MCF 10A (cell line): ENCODE measurements at regions of chr10 and their contacts with region 1.

Region 1: GRCh38 chr10:75358835-75359431 is 42.6 kb downstream of the ZNF503 start:
- DNase-seq: peak; percentile 92
- H3K4me3 Mint-ChIP-seq: peak overlapping the region; percentile 65
- H3K27ac Mint-ChIP-seq: peak overlapping the region; percentile 84
- H3K4me1 Mint-ChIP-seq: peaks cover 21% of the 10 kb centered on the region
- H3K27me3 Mint-ChIP-seq: no peaks in the 10 kb centered on the region
- CTCF ChIP-seq: no peak

Region 2: DNA sequence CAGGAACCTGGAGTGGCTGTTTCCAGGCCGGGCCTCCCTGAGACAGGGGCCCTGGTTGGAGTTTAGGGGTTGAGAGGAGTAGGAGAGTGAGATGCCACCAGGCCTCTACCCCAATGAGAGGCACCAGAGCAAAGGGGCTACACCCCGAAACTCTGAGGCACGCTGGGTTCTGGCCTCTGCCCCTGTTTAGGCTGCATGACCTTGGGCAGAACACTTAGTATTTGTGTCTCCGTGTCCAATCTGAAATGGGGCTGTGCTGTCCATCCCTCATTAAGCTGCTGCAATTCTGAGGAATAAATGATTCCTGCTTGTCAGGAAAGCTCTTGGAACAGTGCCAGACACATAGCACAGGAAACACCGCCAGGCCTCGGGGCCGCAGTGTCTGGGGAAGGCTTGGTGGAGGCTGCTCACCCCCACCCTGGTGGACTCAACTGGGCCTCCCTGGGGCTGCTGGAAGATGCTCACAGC is 287.9 kb before region 1 on chr10:
- CTCF ChIA-PET with region 1: no interaction called
- POLR2A ChIA-PET with region 1: no interaction called
- intact Hi-C with region 1: no loop called
- DNase-seq: no peak
- H3K4me3 Mint-ChIP-seq: no peak overlapping the region
- H3K27ac Mint-ChIP-seq: no peak overlapping the region
- H3K4me1 Mint-ChIP-seq: peaks cover 6% of the 10 kb centered on the region
- H3K27me3 Mint-ChIP-seq: no peaks in the 10 kb centered on the region
- CTCF ChIP-seq: no peak

Region 3: GRCh38 chr10:75250910-75251309 is 108.0 kb before region 1 on chr10:
- CTCF ChIA-PET with region 1: interaction called, 4 read pairs
- POLR2A ChIA-PET with region 1: interaction called, 18 read pairs
- intact Hi-C with region 1: no loop called
- DNase-seq: peak; percentile 92
- H3K4me3 Mint-ChIP-seq: peak overlapping the region; percentile 40
- H3K27ac Mint-ChIP-seq: peak overlapping the region; percentile 91
- H3K4me1 Mint-ChIP-seq: peaks cover 26% of the 10 kb centered on the region
- H3K27me3 Mint-ChIP-seq: no peaks in the 10 kb centered on the region
- CTCF ChIP-seq: no peak

Region 4: GRCh38 chr10:75294866-75295701 is 63.8 kb before region 1 on chr10:
- CTCF ChIA-PET with region 1: interaction called, 4 read pairs
- POLR2A ChIA-PET with region 1: interaction called, 64 read pairs
- intact Hi-C with region 1: loop called (anchors 2 kb)
- DNase-seq: peak; percentile 91
- H3K4me3 Mint-ChIP-seq: no peak overlapping the region
- H3K27ac Mint-ChIP-seq: no peak overlapping the region
- H3K4me1 Mint-ChIP-seq: no peaks in the 10 kb centered on the region
- H3K27me3 Mint-ChIP-seq: no peaks in the 10 kb centered on the region
- CTCF ChIP-seq: peak; percentile 23

Region 5: DNA sequence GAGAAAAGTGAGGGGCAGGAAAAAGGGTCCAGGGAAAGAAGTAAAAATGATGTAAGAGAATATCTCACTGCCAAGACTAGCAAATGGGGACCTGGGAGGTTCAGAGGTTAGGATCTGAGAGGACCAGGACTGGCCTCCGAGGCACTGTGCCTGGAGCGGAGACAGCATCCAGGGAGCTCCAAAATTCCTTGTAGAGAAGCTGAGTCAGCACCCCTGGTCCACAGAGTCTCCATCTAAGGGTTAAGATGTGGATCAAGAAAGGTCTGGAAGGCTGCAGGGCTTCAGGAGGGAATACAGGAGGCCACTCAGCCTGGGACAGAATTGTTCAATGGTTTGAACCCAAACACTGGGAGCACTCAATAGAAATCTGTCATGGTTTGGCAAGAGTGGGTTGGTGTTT is 12.1 kb after region 1 on chr10:
- CTCF ChIA-PET with region 1: interaction called, 3 read pairs
- POLR2A ChIA-PET with region 1: interaction called, 14 read pairs
- intact Hi-C with region 1: no loop called
- DNase-seq: no peak
- H3K4me3 Mint-ChIP-seq: no peak overlapping the region
- H3K27ac Mint-ChIP-seq: no peak overlapping the region
- H3K4me1 Mint-ChIP-seq: no peaks in the 10 kb centered on the region
- H3K27me3 Mint-ChIP-seq: no peaks in the 10 kb centered on the region
- CTCF ChIP-seq: no peak

Region 6: DNA sequence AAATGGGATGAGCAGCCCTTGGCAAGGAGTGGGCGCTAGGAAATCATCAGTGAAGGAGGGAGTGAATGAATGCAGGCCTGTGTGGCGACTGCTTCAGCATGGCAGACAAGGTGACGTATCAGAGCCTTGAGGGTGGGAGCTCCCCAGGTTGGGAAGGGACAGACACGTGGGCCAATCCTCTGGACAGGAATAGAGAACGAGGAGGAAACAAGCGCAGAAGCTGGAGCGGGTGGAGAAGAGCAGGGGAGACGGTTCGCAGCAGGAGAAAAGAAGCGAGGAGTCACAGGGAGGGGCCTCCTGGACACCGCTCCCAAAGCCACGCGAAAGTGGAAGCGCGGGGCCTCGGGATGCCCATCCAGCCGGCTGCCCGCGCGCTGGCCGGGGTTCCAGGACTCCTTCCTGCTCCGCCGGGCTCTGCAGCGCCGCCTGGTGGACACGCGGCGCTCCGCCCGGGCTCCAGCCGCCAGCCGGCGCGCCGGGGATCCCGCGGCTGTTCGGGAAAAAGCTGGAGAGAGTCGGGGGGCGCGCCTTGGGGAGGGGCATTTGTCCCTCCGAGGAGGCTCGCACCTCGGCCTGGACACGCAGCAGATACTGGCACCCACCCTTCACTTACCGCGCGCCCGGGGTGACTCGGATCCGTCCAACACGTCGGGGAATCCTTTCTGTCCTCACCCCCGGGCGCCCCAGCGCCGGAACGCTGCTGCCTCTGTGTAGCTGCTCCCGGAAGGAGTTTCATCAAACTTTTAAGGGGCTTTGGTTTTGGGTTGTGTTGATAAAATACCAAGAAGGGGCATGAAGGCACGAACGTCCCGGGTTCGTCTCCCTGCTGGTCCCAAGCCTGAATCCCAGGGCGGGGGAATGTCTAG is 36.4 kb after region 1 on chr10:
- CTCF ChIA-PET with region 1: interaction called, 12 read pairs
- POLR2A ChIA-PET with region 1: interaction called, 5 read pairs
- intact Hi-C with region 1: no loop called
- DNase-seq: no peak
- H3K4me3 Mint-ChIP-seq: no peak overlapping the region
- H3K27ac Mint-ChIP-seq: no peak overlapping the region
- H3K4me1 Mint-ChIP-seq: peaks cover 4% of the 10 kb centered on the region
- H3K27me3 Mint-ChIP-seq: no peaks in the 10 kb centered on the region
- CTCF ChIP-seq: peak; percentile 78